ENCODE measurements at regions of chr12 and their contacts with region 1.

Region 1: DNA sequence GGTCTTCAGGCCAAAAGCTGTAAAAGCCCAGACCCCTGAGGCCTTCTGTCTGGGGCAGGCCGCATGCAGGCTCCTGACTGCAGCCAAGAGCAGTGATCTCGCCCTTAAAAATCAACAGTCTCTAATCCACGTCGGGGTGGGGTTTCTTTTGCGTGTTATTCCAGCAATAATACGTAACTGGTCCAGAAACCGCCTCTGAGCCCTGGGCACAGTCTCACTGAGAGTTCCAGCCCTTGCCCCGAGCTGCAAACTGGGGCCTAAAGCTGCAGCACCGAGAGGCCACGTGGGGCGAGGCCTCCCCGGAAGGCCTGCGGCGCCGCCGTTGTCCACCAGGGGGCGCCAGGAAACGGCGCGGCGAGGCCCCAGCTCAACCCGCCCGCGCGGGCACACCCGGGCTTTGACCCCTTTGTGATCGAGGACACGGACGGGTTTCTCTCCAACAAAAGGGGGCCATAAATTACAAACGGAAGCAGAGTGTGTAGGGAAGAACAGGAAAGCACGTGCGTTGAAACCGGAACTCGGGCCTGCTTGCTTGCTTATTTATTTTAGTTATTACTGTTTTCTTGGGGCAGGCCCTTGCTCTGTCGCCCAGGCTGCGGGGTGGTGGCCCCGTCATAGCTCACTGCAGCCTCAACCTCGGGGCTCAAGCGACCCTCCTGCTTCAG is 87.2 kb downstream of the NINJ2 start:
- DNase-seq: peak; percentile 96
- H3K4me3 ChIP-seq: peak overlapping the region in 1 of 2 experiments; percentile 25; a peak in 1 of 4 replicates
- H3K27ac ChIP-seq: peak overlapping the region in 1 of 2 experiments; percentile 31; a peak in 2 of 4 replicates
- H3K4me1 ChIP-seq: peaks cover 0 to 27% of the 10 kb centered on the region in 2 experiments; a peak in 2 of 4 replicates
- H3K27me3 ChIP-seq: no peaks in the 10 kb centered on the region
- CTCF ChIP-seq: peak; percentile 95
- EP300 ChIP-seq: peak in 1 of 2 experiments; percentile 13; a peak in 1 of 4 replicates
- RAD21 ChIP-seq: peak; percentile 81

Region 2: DNA sequence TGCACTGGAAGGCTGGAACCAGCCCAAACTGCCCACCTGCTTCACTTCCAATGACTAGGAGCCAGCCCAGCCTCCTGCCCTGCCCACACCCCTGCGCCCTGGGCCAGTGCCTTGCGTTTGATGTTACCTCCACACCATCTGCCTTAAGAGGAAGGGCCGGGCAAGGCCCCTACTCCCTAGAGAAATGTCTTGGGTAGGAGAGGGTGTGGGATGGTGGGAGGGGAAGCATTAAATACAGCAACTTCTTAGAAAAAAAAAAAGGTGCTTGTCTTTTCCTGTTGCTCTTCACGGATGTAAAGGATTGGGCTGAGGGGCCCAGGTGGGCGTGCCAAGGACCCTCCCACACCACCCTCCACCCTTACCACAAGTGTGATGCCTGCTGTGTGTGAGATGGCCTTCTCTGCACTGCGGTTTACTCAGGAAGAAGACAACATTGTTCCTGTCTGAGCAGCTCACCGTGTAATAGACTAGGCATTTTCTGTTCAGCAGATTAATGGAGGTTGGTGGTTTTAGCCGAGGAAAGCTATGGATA is 12.8 kb before region 1 on chr12:
- CTCF ChIA-PET with region 1: interaction called, 12 read pairs
- POLR2A ChIA-PET with region 1: no interaction called
- DNase-seq: no peak
- H3K4me3 ChIP-seq: no peak overlapping the region
- H3K27ac ChIP-seq: no peak overlapping the region
- H3K4me1 ChIP-seq: peaks cover 0 to 16% of the 10 kb centered on the region in 2 experiments; a peak in 1 of 4 replicates
- H3K27me3 ChIP-seq: no peaks in the 10 kb centered on the region; the same call in 1 of the 2 replicates
- CTCF ChIP-seq: no peak
- EP300 ChIP-seq: no peak
- RAD21 ChIP-seq: no peak

Region 3: GRCh38 chr12:614411-614970 is 38.4 kb after region 1 on chr12:
- CTCF ChIA-PET with region 1: interaction called, 25 read pairs
- POLR2A ChIA-PET with region 1: no interaction called
- DNase-seq: peak; percentile 73
- H3K4me3 ChIP-seq: no peak overlapping the region
- H3K27ac ChIP-seq: no peak overlapping the region
- H3K4me1 ChIP-seq: peaks cover 5 to 20% of the 10 kb centered on the region in 2 experiments; a peak in 2 of 4 replicates
- H3K27me3 ChIP-seq: no peaks in the 10 kb centered on the region
- CTCF ChIP-seq: peak; percentile 35
- EP300 ChIP-seq: no peak
- RAD21 ChIP-seq: peak; percentile 66

Region 4: DNA sequence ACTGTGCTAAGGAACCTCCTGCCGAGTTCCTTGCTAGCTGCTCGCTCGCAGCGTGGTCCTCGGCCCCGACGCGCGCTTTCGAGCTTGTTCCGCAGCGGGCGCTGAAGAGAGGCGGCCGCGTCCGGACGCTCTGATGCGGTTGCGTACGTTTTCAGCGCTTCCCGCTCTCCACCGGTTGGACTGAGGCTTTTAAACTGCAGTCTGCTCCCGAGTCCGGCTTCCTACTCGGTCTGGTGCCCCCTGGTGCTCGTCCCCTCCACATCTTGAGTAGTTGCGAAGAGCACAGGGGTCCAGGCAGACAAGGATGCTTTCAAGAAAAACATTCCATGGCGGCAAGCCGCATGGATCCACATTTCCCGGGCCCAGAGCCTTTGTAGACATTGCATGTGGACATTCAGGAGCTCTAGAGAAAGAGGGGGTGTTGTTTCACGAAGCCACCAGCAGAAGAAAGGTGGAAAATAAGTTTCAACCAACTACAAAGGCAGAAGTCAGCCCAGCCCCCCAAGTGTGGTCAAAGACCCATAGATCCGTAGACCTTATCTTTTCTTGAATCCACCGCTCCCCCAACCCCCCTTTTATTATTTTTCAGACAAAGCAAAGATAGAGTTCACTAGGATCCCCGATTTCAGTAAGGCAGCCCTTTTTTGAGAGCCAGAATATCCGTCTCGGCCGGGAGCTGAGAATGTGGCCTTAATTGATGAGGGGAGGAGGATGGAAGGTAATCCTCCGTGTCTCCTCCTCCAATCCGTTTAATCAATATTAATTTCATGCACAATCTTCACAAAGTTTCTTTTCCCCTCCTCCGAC is 175.3 kb after region 1 on chr12:
- CTCF ChIA-PET with region 1: interaction called, 136 read pairs
- POLR2A ChIA-PET with region 1: interaction called, 17 read pairs
- DNase-seq: peak; percentile 86
- H3K4me3 ChIP-seq: peak overlapping the region; percentile 58 to 78
- H3K27ac ChIP-seq: peak overlapping the region; percentile 86 to 99
- H3K4me1 ChIP-seq: peaks cover 8 to 14% of the 10 kb centered on the region in 2 experiments; a peak in 3 of 4 replicates
- H3K27me3 ChIP-seq: no peaks in the 10 kb centered on the region
- CTCF ChIP-seq: peak; percentile 82
- EP300 ChIP-seq: no peak; a peak in 1 of 4 replicates
- RAD21 ChIP-seq: peak; percentile 80

Region 5: DNA sequence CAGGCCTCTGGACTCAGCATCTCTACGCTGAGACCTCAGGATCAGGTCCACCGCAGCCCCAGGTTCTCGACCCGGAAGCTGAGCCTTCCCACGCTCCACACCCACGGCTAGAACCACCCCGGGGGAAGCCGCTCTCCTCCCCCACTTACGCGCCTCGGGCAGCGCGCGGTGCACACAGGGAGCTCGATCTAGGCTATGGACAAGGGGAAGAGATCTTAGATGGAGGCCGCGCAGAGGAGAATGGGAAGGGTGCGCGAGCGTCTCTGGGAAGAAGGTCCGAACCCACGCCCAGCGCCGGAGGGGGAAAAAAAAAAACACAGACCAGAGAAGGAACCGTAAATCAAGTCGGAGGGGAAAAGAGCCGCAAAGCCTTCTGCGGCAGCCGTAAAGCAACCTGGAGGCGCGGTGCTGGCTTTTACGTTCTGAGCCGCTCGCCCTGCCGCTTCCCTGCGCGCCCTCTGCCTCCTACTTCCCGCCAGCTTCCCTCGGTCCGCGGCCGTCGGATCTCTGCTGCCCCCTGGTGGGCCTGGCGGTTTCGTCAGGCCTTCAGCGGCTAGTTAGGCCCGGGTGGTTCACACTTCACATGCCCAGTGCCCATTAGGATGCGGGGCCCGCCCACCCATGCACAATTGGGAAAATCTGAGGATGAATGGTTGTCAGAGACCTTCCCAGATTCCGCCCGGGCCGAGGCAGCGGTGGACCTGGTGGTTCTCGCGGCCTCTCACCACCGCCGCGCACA is 373.5 kb after region 1 on chr12 and contains the start of gene RAD52:
- CTCF ChIA-PET with region 1: interaction called, 22 read pairs
- POLR2A ChIA-PET with region 1: interaction called, 5 read pairs
- DNase-seq: peak; percentile 91
- H3K4me3 ChIP-seq: peak within 1 kb of the TSS; percentile 69 to 94
- H3K27ac ChIP-seq: peak within 1 kb of the TSS; percentile 95
- H3K4me1 ChIP-seq: peaks cover 2 to 6% of the 10 kb centered on the region in 2 experiments; a peak in 3 of 4 replicates
- H3K27me3 ChIP-seq: no peaks in the 10 kb centered on the region
- CTCF ChIP-seq: peak; percentile 91
- EP300 ChIP-seq: peak; percentile 18 to 69; a peak in 1 of 4 replicates
- RAD21 ChIP-seq: peak; percentile 79
- polyA plus RNA-seq, gene RAD52: 11.2 and 12.1 TPM in 2 replicates